Activated CD4-positive, alpha-beta T cell treated with anti-CD3 and anti-CD28 coated beads, Interleukin-2, amount 10 ng/mL, durations not matched to agents 24 days and 14 days (primary cell): ENCODE measurements at regions of chr15 and their contacts with region 1.

Region 1: GRCh38 chr15:63048115-63048775 is 5.7 kb downstream of the TPM1 start:
- DNase-seq: peak; percentile 95
- H3K4me3 Mint-ChIP-seq: peak overlapping the region; percentile 81
- H3K27ac Mint-ChIP-seq: peak overlapping the region; percentile 59
- H3K4me1 Mint-ChIP-seq: peaks cover 21% of the 10 kb centered on the region
- H3K27me3 Mint-ChIP-seq: peaks cover 51% of the 10 kb centered on the region

Region 2: GRCh38 chr15:63122002-63122893 is 74.0 kb after region 1 on chr15:
- intact Hi-C with region 1: loop called (anchors 1 kb)
- DNase-seq: peak; percentile 95
- H3K4me3 Mint-ChIP-seq: peak overlapping the region; percentile 94
- H3K27ac Mint-ChIP-seq: peak overlapping the region; percentile 85
- H3K4me1 Mint-ChIP-seq: peaks cover 8% of the 10 kb centered on the region
- H3K27me3 Mint-ChIP-seq: no peaks in the 10 kb centered on the region

Region 3: GRCh38 chr15:63277038-63277892 is 229.0 kb after region 1 on chr15 and contains the start of gene APH1B:
- intact Hi-C with region 1: loop called (anchors 5 kb)
- DNase-seq: peak; percentile 95
- H3K4me3 Mint-ChIP-seq: peak within 1 kb of the TSS; percentile 93
- H3K27ac Mint-ChIP-seq: peak within 1 kb of the TSS; percentile 89
- H3K4me1 Mint-ChIP-seq: peaks cover 30% of the 10 kb centered on the region
- H3K27me3 Mint-ChIP-seq: no peaks in the 10 kb centered on the region
- total RNA-seq, gene APH1B: 3.7 and 3.8 TPM in 2 replicates

Region 4: GRCh38 chr15:64430000-64430735 is 1381.9 kb after region 1 on chr15:
- intact Hi-C with region 1: no loop called
- DNase-seq: peak; percentile 87
- H3K4me3 Mint-ChIP-seq: peak overlapping the region; percentile 79
- H3K27ac Mint-ChIP-seq: peak overlapping the region; percentile 95
- H3K4me1 Mint-ChIP-seq: peaks cover 40% of the 10 kb centered on the region
- H3K27me3 Mint-ChIP-seq: no peaks in the 10 kb centered on the region